Activated CD8-positive, alpha-beta memory T cell treated with anti-CD3 and anti-CD28 coated beads, Interleukin-2, amount 10 ng/mL, durations not matched to agents 7 days and 5 days (primary cell): ENCODE measurements at regions of chr1 and their contacts with region 1.

Region 1: DNA sequence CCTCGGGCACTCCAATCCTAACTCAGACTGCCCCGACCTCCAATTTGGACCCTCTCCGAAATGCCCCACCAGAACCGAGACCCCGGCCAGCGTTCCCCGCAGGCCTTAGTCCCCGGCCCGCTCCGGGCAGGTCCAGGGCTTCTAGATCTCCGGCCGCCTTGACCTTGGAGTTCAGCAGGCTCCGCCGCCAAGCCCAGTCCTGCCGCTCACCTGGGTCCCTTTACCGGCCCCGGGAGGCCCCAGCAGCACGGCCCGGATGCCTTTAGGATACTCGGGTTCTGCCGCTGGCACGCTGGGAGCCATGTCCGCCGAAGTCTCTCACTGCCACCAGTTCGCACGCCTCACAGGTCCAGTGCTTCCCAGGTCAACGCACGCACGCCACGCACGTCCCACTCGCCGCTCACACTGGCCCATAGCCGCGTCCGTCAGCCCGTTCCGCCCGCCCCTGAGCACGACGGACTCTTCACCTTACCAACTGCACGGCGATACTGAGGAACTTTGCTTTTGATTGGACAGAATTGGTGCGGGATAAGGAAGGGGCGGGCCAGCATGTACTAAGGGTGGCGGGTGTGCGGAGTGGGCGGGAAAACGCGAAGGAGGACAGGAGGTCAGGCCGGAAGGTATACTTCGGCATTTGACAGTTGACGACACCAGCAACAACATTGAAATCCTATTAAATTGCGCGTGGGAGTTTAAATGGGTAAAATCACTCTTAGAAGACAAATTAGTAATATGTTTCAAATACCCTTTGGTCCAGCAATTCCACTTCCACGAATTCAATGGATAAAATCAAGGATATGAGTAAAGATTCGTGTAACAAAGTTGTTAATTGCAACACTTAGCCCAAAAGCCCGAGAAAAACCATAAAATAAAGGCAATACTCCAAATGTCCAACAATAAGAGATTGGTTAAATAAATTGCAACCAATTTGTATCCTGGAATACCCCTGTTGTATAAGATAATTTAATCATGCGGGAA is at the start of gene AK2:
- DNase-seq: peak; percentile 97
- ATAC-seq: peak; percentile 100
- H3K4me3 Mint-ChIP-seq: peak within 1 kb of the TSS; percentile 93
- H3K27ac Mint-ChIP-seq: peak within 1 kb of the TSS; percentile 89
- H3K4me1 Mint-ChIP-seq: peaks cover 45% of the 10 kb centered on the region
- H3K27me3 Mint-ChIP-seq: no peaks in the 10 kb centered on the region
- total RNA-seq, gene AK2: 218 to 279 TPM

Region 2: DNA sequence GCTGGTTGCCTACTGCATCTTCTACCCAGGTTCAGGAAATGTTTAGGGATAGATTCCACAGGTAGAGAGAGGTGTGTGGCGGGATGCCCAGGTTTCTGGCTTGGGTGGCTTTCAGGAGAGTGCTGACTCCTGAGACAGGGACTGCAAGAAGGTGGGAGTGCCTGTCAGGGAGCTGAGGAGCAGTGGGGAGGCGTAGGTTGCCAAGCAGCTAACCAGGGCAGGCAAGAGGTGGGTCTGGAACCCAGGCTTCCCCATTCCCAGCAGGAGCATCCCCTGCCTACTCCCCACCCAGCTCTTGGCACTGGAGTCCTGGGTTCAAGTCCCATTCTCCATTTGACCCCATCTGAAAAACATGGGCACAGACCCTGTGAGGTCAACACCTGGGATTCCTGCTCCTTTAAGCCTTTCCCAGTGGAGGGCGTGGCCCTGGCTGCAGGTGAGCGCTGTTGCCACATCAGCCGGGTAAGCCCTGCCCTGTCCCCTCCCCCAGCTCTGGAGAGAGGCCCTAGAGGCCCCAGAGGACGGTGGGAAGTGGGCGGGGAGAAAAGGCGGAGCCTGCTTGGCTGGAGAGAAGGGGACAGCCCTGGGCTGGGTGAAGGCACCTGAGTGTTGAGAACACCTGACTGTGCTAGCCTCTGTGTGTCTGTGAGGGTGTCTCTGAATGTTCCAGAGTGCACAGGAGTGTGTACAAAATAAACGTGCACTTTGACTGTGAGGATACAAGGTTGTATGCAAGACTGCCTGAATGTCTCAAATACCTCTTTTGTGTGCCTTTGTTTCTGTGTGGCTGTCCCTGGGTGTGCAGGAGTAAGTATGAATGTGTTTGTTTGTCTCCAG is 320.3 kb before region 1 on chr1:
- CTCF ChIA-PET with region 1: no interaction called
- DNase-seq: peak; percentile 72
- ATAC-seq: peak; percentile 63
- H3K4me3 Mint-ChIP-seq: no peak overlapping the region
- H3K27ac Mint-ChIP-seq: no peak overlapping the region
- H3K4me1 Mint-ChIP-seq: peaks cover 8% of the 10 kb centered on the region
- H3K27me3 Mint-ChIP-seq: peaks cover 5% of the 10 kb centered on the region

Region 3: GRCh38 chr1:33055210-33056008 is 18.6 kb after region 1 on chr1:
- CTCF ChIA-PET with region 1: interaction called, 14 read pairs
- DNase-seq: peak; percentile 49
- ATAC-seq: peak; percentile 71
- H3K4me3 Mint-ChIP-seq: no peak overlapping the region
- H3K27ac Mint-ChIP-seq: no peak overlapping the region
- H3K4me1 Mint-ChIP-seq: peaks cover 5% of the 10 kb centered on the region
- H3K27me3 Mint-ChIP-seq: peaks cover 4% of the 10 kb centered on the region

Region 4: GRCh38 chr1:33181921-33182341 is 145.1 kb after region 1 on chr1 and contains the start of gene TRIM62:
- CTCF ChIA-PET with region 1: no interaction called
- DNase-seq: peak; percentile 80
- ATAC-seq: peak; percentile 72
- H3K4me3 Mint-ChIP-seq: peak within 1 kb of the TSS; percentile 81
- H3K27ac Mint-ChIP-seq: peak within 1 kb of the TSS; percentile 82
- H3K4me1 Mint-ChIP-seq: peaks cover 22% of the 10 kb centered on the region
- H3K27me3 Mint-ChIP-seq: peaks cover 28% of the 10 kb centered on the region
- total RNA-seq, gene TRIM62: 9.9 to 13.0 TPM